Activated naive CD4-positive, alpha-beta T cell treated with anti-CD3 and anti-CD28 coated beads for 36 hours (primary cell): ENCODE measurements at regions of chr6 and their contacts with region 1.

Region 1: GRCh38 chr6:108896111-108896661 is 48.0 kb downstream of the ARMC2 start:
- DNase-seq: no peak
- H3K4me3 Mint-ChIP-seq: no peak overlapping the region
- H3K27ac Mint-ChIP-seq: no peak overlapping the region
- H3K4me1 Mint-ChIP-seq: peaks cover 12% of the 10 kb centered on the region
- H3K27me3 Mint-ChIP-seq: no peaks in the 10 kb centered on the region

Region 2: DNA sequence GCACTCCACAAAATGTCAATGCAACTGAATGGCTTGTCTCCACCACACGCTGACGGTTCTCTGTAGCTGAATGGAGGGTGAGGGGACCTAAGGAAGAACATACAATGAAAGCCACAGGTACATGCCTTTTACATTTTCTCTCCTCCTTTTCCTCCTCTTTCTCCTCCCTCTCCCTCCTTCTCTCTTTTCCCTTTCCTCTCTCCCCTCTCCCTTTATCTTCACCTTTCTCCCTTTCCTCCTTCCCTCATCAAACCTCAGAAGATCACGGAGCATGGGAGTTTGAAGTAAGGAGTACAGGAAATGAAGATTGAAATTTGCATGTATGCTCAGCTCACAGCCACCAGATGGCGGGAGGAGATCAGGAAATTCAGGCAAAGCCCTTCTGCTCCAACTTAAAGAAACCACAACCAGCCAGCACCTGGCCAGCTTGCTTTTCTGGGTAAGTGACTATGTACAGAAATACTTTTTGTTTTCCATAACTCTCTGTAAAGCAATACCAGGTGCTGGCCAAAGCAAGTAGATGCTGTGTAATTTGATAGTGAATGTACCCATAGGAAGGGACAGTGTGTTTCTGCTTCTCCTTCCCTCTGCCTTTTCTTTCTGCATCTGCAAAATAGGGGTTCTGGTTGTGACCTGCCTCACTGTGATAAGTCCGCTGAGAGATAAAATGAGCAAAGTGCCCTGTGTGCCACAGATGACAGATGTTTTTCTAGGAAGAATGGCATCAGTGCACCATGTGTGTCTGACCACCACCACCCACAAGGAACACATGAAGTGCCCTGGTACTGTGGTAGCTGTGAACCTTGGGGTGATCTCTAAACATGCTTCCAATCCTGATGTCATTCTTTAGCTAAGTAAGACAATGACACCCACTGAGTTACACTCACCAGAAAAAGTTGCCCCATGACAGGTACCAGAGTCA is 354.1 kb before region 1 on chr6:
- CTCF ChIA-PET with region 1: interaction called, 23 read pairs
- intact Hi-C with region 1: loop called (anchors 1 kb)
- DNase-seq: peak; percentile 83
- H3K4me3 Mint-ChIP-seq: peak overlapping the region; percentile 34
- H3K27ac Mint-ChIP-seq: no peak overlapping the region
- H3K4me1 Mint-ChIP-seq: peaks cover 7% of the 10 kb centered on the region
- H3K27me3 Mint-ChIP-seq: peaks cover 8% of the 10 kb centered on the region

Region 3: DNA sequence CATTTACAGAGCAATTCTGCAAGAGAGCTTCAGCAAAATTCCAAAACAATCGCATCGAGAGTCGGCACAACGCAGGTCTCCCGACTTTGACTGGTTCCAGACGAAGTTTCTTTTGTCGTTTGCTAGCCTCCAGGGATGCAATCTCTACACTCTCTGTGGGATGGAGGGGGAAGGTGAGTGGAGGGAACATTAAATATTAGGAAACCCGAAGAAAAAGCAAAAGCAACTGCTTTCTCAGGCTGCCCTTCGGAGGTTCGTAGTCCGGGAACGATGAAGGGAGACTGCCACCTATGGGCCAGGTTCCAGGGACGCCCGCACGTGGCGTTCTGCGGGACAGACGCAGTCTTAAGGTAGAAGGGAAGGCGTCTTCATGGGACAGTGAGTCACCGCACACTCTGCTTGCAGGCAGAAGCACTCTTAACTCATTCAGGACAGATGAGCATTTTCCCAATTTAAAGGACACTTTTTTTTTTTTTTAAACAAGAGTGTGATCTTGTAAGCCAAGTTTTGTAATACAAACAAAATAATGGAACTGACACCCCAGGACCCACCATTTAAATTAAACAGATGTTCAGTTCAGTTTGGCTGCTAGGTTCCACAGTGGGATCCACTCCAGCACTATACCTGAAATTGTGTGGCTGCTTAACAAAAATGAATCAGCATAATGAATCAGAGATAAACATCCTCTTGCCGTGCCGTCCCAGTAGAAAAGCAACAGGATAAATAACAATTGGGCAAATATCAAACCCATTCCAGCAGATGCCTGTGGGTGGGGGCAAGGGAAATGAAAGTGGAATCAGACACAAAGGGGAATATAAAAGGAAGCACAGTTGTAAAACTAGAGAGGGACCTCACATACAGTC is 113.8 kb before region 1 on chr6:
- CTCF ChIA-PET with region 1: interaction called, 4 read pairs
- intact Hi-C with region 1: loop called (anchors 1 kb)
- DNase-seq: peak; percentile 92
- H3K4me3 Mint-ChIP-seq: peak overlapping the region; percentile 68
- H3K27ac Mint-ChIP-seq: no peak overlapping the region
- H3K4me1 Mint-ChIP-seq: peaks cover 10% of the 10 kb centered on the region
- H3K27me3 Mint-ChIP-seq: peaks cover 3% of the 10 kb centered on the region

Region 4: GRCh38 chr6:108848116-108848868 is 47.9 kb before region 1 on chr6 and contains the start of gene ARMC2:
- CTCF ChIA-PET with region 1: interaction called, 14 read pairs
- intact Hi-C with region 1: loop called (anchors 2 kb)
- DNase-seq: peak; percentile 87
- H3K4me3 Mint-ChIP-seq: peak within 1 kb of the TSS; percentile 82
- H3K27ac Mint-ChIP-seq: peak within 1 kb of the TSS; percentile 28
- H3K4me1 Mint-ChIP-seq: peaks cover 20% of the 10 kb centered on the region
- H3K27me3 Mint-ChIP-seq: no peaks in the 10 kb centered on the region
- total RNA-seq, gene ARMC2: 3.6 to 3.9 TPM